ENCODE measurements at regions of chr19 and their contacts with region 1.

Region 1: GRCh38 chr19:38583219-38583984 is 34.4 kb downstream of the MAP4K1 start:
- DNase-seq: no peak
- H3K4me3 ChIP-seq: no peak overlapping the region
- CTCF ChIP-seq: no peak

Region 2: GRCh38 chr19:38527466-38528136 is 55.8 kb before region 1 on chr19:
- in situ Hi-C with region 1: loop called (anchors 10 kb)
- DNase-seq: no peak
- H3K4me3 ChIP-seq: no peak overlapping the region
- CTCF ChIP-seq: no peak